ENCODE measurements at regions of chr12 and their contacts with region 1.

Region 1: GRCh38 chr12:52879394-52880351 is 25.2 kb downstream of the KRT8 start:
- DNase-seq: peak; percentile 79
- H3K4me3 ChIP-seq: peak overlapping the region in 1 of 3 experiments; percentile 36
- H3K27ac ChIP-seq: peak overlapping the region; percentile 6
- H3K4me1 ChIP-seq: peaks cover 51% of the 10 kb centered on the region
- H3K27me3 ChIP-seq: no peaks in the 10 kb centered on the region
- CTCF ChIP-seq: peak; percentile 91 to 99

Region 2: DNA sequence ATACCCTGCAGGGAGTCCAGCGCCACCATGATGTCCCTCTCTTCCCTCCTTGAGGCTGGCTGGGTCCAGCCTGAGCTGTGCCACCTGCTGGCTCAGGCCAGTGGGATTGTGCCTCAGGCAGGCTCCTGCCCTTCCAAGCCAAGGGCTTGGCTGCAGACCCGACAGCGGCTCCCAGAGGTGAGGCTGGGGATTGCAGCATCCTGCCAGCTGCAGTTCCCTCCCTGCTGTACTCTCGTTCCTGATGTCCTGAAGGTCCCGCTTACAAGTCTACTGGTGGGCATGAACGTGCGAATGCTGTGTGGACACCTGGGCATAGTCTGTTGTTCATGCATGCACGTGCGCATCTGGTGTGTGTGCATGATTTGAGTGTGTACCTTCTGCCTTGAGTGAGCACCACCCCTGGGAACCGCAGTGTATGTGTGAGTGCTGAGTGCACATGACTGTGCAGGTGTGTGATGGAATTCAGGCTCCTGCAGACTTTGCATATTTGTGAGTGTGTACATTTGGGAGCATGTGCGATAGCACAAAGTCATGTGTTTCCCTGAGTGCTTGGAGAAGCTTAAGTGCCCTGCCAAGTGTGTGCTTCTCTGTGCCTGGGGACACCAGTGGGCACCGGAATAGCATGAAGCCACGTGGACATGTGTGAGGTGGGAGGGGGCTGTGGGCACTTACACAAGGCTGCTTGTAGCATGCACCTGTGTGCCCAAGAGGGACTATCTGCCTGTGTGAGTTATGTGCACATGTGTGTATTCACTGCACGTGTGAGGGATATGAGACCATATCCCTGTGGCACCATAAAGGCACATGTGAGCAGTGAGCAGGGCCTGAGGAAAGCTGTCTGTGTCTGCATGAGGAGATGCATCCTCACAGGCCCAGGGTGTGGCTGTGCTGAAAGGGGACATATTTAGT is 665.9 kb before region 1 on chr12:
- CTCF ChIA-PET with region 1: no interaction called
- dilution Hi-C with region 1: no loop called
- in situ Hi-C with region 1: no loop called
- intact Hi-C with region 1: loop called (anchors 10 kb)
- DNase-seq: peak; percentile 79
- H3K4me3 ChIP-seq: no peak overlapping the region
- H3K27ac ChIP-seq: no peak overlapping the region
- H3K4me1 ChIP-seq: peaks cover 73% of the 10 kb centered on the region
- H3K27me3 ChIP-seq: no peaks in the 10 kb centered on the region
- CTCF ChIP-seq: peak; percentile 98 to 100

Region 3: GRCh38 chr12:52327052-52327829 is 552.4 kb before region 1 on chr12:
- CTCF ChIA-PET with region 1: interaction called, 11 read pairs
- dilution Hi-C with region 1: no loop called
- in situ Hi-C with region 1: no loop called
- intact Hi-C with region 1: loop called (anchors 1 kb)
- DNase-seq: peak; percentile 97
- H3K4me3 ChIP-seq: no peak overlapping the region
- H3K27ac ChIP-seq: peak overlapping the region; percentile 56
- H3K4me1 ChIP-seq: peaks cover 15% of the 10 kb centered on the region
- H3K27me3 ChIP-seq: no peaks in the 10 kb centered on the region
- CTCF ChIP-seq: peak; percentile 99 to 100

Region 4: DNA sequence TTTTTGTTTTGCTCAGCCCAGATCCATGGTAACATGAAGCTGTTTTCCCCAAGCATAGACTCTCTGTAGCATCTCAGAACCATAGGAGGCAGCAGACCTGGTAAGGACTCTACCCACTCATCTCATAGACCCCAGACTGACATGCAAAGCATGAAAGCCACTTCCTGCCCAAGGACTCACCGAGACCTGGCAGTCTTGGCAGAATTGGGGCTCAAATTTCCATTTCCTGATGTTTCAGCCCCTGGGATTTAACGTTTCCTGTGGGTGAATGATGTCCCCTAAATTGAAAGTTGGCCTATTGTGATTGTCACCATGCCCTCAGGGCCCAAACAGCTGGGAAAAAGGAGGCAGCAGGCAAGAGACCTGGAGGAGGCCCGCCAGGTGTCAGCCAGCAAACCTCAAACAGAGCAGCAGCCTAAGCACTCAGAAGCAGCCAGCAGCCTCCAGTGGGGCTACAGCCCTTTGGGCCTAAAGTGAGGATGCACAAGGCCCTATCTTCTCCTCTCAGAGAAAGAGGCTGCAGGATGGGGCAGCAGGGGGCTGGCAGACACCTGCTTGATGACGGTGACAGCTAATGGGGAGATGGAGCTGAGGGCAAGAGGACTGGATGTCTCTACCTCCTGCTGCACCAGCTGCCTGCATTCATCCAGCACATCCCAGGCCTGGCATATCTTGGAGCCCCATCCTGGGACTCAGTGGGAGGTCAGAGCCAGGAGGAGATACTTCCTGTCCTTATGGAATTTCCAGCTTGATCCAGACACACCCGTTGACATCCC is 520.9 kb before region 1 on chr12:
- CTCF ChIA-PET with region 1: no interaction called
- dilution Hi-C with region 1: no loop called
- in situ Hi-C with region 1: no loop called
- intact Hi-C with region 1: no loop called
- DNase-seq: no peak
- H3K4me3 ChIP-seq: no peak overlapping the region
- H3K27ac ChIP-seq: no peak overlapping the region
- H3K4me1 ChIP-seq: peaks cover 3% of the 10 kb centered on the region
- H3K27me3 ChIP-seq: no peaks in the 10 kb centered on the region
- CTCF ChIP-seq: no peak

Region 5: GRCh38 chr12:52390739-52391617 is 488.7 kb before region 1 on chr12:
- CTCF ChIA-PET with region 1: interaction called, 3 read pairs
- dilution Hi-C with region 1: no loop called
- in situ Hi-C with region 1: no loop called
- intact Hi-C with region 1: loop called (anchors 1 kb)
- DNase-seq: no peak
- H3K4me3 ChIP-seq: no peak overlapping the region
- H3K27ac ChIP-seq: peak overlapping the region; percentile 19
- H3K4me1 ChIP-seq: peaks cover 59% of the 10 kb centered on the region
- H3K27me3 ChIP-seq: no peaks in the 10 kb centered on the region
- CTCF ChIP-seq: peak; percentile 89 to 90

Region 6: GRCh38 chr12:52543985-52544883 is 335.4 kb before region 1 on chr12:
- CTCF ChIA-PET with region 1: no interaction called
- dilution Hi-C with region 1: no loop called
- in situ Hi-C with region 1: no loop called
- intact Hi-C with region 1: loop called (anchors 2 kb)
- DNase-seq: no peak
- H3K4me3 ChIP-seq: no peak overlapping the region
- H3K27ac ChIP-seq: no peak overlapping the region
- H3K4me1 ChIP-seq: peaks cover 14% of the 10 kb centered on the region
- H3K27me3 ChIP-seq: no peaks in the 10 kb centered on the region
- CTCF ChIP-seq: peak; percentile 20 to 26

Region 7: GRCh38 chr12:52667511-52667910 is 212.2 kb before region 1 on chr12:
- CTCF ChIA-PET with region 1: no interaction called
- dilution Hi-C with region 1: no loop called
- in situ Hi-C with region 1: no loop called
- intact Hi-C with region 1: loop called (anchors 5 kb)
- DNase-seq: no peak
- H3K4me3 ChIP-seq: no peak overlapping the region
- H3K27ac ChIP-seq: no peak overlapping the region
- H3K4me1 ChIP-seq: peaks cover 18% of the 10 kb centered on the region
- H3K27me3 ChIP-seq: peaks cover 2% of the 10 kb centered on the region
- CTCF ChIP-seq: peak in 1 of 2 donors; percentile 40